Naive thymus-derived CD4-positive, alpha-beta T cell (primary cell): ENCODE measurements at regions of chr12 and their contacts with region 1.

Region 1: DNA sequence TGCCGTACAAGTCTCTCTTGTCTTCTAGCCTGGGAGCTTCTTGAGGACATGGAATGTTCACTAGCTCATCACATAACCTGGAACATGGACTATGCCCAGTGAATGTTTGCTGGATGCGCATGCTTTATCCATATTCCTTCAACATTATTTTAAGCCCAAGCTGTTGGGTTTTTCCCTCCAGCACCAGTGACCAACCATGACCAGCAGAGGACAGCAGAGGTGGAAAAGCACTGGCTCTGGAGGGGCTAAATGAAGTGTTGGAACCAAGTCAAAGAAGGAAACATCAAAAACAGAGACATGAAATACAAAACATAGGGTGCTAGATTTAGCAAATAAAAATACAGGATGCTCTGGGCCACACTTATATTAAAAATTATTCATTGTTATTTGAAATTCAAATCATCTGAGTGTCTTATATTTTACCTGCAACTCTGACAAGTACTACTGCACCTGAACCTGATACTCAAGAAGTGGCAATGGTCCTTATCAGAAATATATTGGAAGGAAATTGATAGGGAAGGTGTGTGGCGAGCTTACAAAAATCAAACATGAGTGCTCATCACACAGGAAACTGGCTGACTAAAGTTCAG is 23.1 kb upstream of the HELB start:
- DNase-seq: peak in 6 of 9 donors; percentile 33 to 58 (median 52)
- ATAC-seq: peak; percentile 76
- H3K4me3 ChIP-seq: no peak overlapping the region
- H3K4me3 Mint-ChIP-seq: peak overlapping the region in 8 of 10 donors; percentile 2 to 67 (median 20)
- H3K27ac ChIP-seq: no peak overlapping the region
- H3K27ac Mint-ChIP-seq: peak overlapping the region in 4 of 9 donors; percentile 22 to 78 (median 49)
- H3K4me1 ChIP-seq: peaks cover 17 to 38% of the 10 kb centered on the region in 2 donors
- H3K4me1 Mint-ChIP-seq: peaks cover 33 to 70% (median 52%) of the 10 kb centered on the region in 7 donors
- H3K27me3 ChIP-seq: no peaks in the 10 kb centered on the region
- H3K27me3 Mint-ChIP-seq: no peaks in the 10 kb centered on the region

Region 2: GRCh38 chr12:66321435-66321834 is 42.2 kb after region 1 on chr12:
- CTCF ChIA-PET with region 1: interaction called, 6 read pairs
- POLR2A ChIA-PET with region 1: interaction called, 3 read pairs
- intact Hi-C with region 1: loop called in 1 of 2 experiments (anchors 5 kb)
- DNase-seq: no peak
- ATAC-seq: peak; percentile 76
- H3K4me3 ChIP-seq: no peak overlapping the region
- H3K4me3 Mint-ChIP-seq: no peak overlapping the region
- H3K27ac ChIP-seq: no peak overlapping the region
- H3K27ac Mint-ChIP-seq: peak overlapping the region in 6 of 9 donors; percentile 1 to 71 (median 10)
- H3K4me1 ChIP-seq: peaks cover 0 to 4% of the 10 kb centered on the region in 2 donors
- H3K4me1 Mint-ChIP-seq: peaks cover 18 to 80% (median 69%) of the 10 kb centered on the region in 7 donors
- H3K27me3 ChIP-seq: no peaks in the 10 kb centered on the region
- H3K27me3 Mint-ChIP-seq: no peaks in the 10 kb centered on the region

Region 3: GRCh38 chr12:66345212-66345611 is 66.0 kb after region 1 on chr12:
- CTCF ChIA-PET with region 1: no interaction called
- POLR2A ChIA-PET with region 1: no interaction called
- intact Hi-C with region 1: loop called in 1 of 2 experiments (anchors 5 kb)
- DNase-seq: no peak
- ATAC-seq: no peak
- H3K4me3 ChIP-seq: no peak overlapping the region
- H3K4me3 Mint-ChIP-seq: peak overlapping the region in 6 of 10 donors; percentile 14 to 40 (median 26)
- H3K27ac ChIP-seq: no peak overlapping the region
- H3K27ac Mint-ChIP-seq: peak overlapping the region; percentile 10 to 88 (median 60)
- H3K4me1 ChIP-seq: peaks cover 0 to 7% of the 10 kb centered on the region in 2 donors
- H3K4me1 Mint-ChIP-seq: peaks cover 12 to 31% (median 27%) of the 10 kb centered on the region in 7 donors
- H3K27me3 ChIP-seq: no peaks in the 10 kb centered on the region
- H3K27me3 Mint-ChIP-seq: no peaks in the 10 kb centered on the region